Endothelial cell of umbilical vein (primary cell): ENCODE measurements at regions of chr3 and their contacts with region 1.

Region 1: DNA sequence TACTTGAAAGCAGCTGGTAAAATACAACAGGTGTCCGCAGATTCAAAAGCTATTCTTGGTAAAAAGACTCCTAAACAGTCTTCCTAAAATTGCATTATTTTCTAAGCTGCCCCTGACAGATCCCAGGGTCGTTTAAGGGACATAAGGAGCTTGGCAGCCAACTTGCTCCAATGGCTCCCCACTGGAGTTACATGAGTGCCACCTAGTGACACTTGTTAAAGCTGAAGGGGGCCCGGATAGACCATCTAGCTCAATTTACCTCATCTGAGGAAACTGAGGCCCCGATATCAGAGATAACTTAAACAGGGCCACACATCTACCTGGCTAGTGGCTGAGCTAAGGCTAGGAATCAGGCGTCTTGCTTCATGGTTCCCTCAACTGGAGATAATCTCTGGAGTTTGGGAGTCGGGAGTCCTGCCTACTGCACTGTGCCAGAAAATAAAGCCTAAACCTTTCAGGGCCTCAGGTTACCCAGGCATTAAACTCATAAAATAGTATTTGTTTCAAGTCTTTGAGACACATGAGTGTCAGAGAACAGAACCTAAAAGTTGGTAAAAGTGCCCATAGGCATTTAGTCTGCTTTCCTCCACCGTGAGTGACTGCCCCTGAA is 6.5 kb upstream of the TBC1D23 start:
- DNase-seq: peak; percentile 75
- H3K4me3 ChIP-seq: no peak overlapping the region
- H3K27ac ChIP-seq: no peak overlapping the region
- H3K4me1 ChIP-seq: no peaks in the 10 kb centered on the region
- H3K27me3 ChIP-seq: no peaks in the 10 kb centered on the region
- CTCF ChIP-seq: peak; percentile 76 to 81
- POLR2A ChIP-seq: no peak

Region 2: DNA sequence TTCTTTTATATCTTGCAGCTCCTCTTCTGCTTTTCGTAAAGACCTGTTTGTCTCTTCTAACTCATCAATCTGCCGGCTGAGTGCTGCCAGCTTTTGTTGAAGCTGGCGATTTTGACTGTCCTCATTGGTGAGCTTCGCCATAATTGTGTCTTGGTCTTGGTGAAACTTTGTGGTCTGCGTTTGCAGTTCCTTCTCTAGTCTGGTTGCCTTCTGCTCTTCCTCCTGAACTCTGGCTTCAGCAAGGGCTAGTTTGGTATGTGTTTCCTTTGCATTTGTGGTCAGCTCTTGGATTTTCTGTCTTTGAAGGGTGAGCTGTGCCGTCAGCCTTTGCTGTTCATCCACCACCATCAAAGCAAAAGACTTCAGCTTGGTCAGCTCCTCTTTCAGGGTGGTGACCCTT is 403.7 kb before region 1 on chr3:
- CTCF ChIA-PET with region 1: interaction called, 21 read pairs
- POLR2A ChIA-PET with region 1: no interaction called
- dilution Hi-C with region 1: no loop called
- intact Hi-C with region 1: no loop called
- DNase-seq: no peak
- H3K4me3 ChIP-seq: no peak overlapping the region
- H3K27ac ChIP-seq: no peak overlapping the region
- H3K4me1 ChIP-seq: peaks cover 5% of the 10 kb centered on the region
- H3K27me3 ChIP-seq: no peaks in the 10 kb centered on the region
- CTCF ChIP-seq: no peak
- POLR2A ChIP-seq: no peak

Region 3: DNA sequence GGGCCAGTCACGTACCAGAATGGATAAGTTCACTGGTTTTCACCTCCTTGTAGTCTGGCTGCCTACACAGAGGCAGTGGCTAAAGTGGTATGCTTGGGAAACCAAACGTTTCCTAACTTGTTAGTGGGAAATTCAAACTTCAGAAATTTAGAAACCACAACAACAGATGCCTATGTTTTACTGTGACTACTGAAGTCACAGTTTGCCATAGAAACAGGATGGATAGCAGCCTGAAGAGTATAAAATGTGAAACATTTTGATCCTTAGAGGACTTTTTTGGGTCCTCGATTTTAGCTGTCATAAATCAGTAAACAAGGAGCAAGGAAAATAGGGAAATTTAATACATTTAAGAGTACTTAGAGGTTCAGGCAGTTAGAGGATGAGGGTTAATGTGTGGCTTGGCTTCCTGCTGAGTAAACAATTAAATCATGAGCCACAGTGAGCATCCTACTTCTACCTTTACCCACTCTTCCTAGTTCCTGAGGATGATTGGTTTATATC is 388.0 kb before region 1 on chr3:
- CTCF ChIA-PET with region 1: interaction called, 26 read pairs
- POLR2A ChIA-PET with region 1: no interaction called
- dilution Hi-C with region 1: no loop called
- intact Hi-C with region 1: no loop called
- DNase-seq: no peak
- H3K4me3 ChIP-seq: no peak overlapping the region
- H3K27ac ChIP-seq: peak overlapping the region; percentile 80
- H3K4me1 ChIP-seq: peaks cover 57% of the 10 kb centered on the region
- H3K27me3 ChIP-seq: no peaks in the 10 kb centered on the region
- CTCF ChIP-seq: no peak
- POLR2A ChIP-seq: no peak

Region 4: DNA sequence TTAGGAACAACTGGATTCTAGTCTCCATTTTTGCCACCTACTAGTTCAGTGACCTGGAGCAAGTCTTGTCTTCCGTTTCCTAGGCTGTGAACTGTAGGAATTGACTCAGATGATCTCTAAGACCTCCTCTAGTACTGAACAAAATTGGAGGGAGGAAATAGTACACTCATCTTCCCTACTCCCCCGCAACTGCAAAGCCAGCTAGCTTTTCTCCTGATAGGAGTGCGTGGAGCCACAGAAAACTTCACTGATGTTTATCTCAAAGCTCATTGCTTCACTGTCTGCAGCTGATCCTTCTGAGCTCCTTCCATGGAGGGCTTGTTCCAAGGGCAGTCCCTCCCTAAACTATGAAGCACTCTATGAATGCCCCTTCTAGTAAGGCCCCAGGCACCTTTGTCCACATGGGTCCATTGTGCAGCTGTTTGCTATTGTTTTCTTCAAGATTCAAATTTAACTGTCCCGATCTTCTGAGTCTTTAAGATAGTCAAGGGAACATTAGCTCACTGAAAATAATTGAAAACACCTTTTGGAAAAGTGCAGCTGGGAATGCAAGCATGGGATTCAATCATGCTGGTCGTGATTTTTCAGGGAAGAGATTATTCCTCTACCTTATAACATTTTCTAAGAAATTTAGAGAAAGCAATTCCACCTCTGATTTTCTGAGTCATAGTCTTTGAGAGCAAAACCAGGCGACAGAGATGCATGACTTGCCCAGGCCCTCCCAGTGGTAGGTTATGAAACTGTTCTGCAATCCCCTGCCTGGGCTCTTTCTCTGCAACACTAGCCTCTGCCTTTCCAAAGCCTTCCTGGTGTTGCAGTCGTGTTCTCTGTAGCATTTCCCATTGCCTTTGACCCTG is 164.2 kb before region 1 on chr3:
- CTCF ChIA-PET with region 1: interaction called, 16 read pairs
- POLR2A ChIA-PET with region 1: no interaction called
- dilution Hi-C with region 1: no loop called
- intact Hi-C with region 1: no loop called
- DNase-seq: no peak
- H3K4me3 ChIP-seq: no peak overlapping the region
- H3K27ac ChIP-seq: no peak overlapping the region
- H3K4me1 ChIP-seq: peaks cover 5% of the 10 kb centered on the region
- H3K27me3 ChIP-seq: no peaks in the 10 kb centered on the region
- CTCF ChIP-seq: peak; percentile 11 to 55
- POLR2A ChIP-seq: no peak

Region 5: GRCh38 chr3:100244264-100244663 is 10.0 kb before region 1 on chr3:
- CTCF ChIA-PET with region 1: no interaction called
- POLR2A ChIA-PET with region 1: no interaction called
- dilution Hi-C with region 1: no loop called
- intact Hi-C with region 1: no loop called
- DNase-seq: no peak
- H3K4me3 ChIP-seq: no peak overlapping the region
- H3K27ac ChIP-seq: no peak overlapping the region
- H3K4me1 ChIP-seq: no peaks in the 10 kb centered on the region
- H3K27me3 ChIP-seq: no peaks in the 10 kb centered on the region
- CTCF ChIP-seq: no peak
- POLR2A ChIP-seq: no peak